IMR-90 (cell line): ENCODE measurements at regions of chr17 and their contacts with region 1.

Region 1: GRCh38 chr17:50200457-50201275 is 765 bp downstream of the COL1A1 start:
- DNase-seq: peak; percentile 82
- ATAC-seq: peak; percentile 24
- H3K4me3 ChIP-seq: peak overlapping the region; percentile 80
- H3K27ac ChIP-seq: peak overlapping the region; percentile 99
- H3K4me1 ChIP-seq: peaks cover 49% of the 10 kb centered on the region
- H3K27me3 ChIP-seq: no peaks in the 10 kb centered on the region
- CTCF ChIP-seq: peak; percentile 67
- POLR2A ChIP-seq: peak; percentile 16
- RAD21 ChIP-seq: peak; percentile 70

Region 2: GRCh38 chr17:50169121-50169764 is 31.4 kb before region 1 on chr17:
- CTCF ChIA-PET with region 1: interaction called, 5 read pairs
- POLR2A ChIA-PET with region 1: interaction called, 4 read pairs
- dilution Hi-C with region 1: no loop called
- in situ Hi-C with region 1: no loop called
- intact Hi-C with region 1: loop called (anchors 1 kb)
- DNase-seq: peak; percentile 74
- ATAC-seq: peak; percentile 66
- H3K4me3 ChIP-seq: no peak overlapping the region
- H3K27ac ChIP-seq: no peak overlapping the region
- H3K4me1 ChIP-seq: peaks cover 8% of the 10 kb centered on the region
- H3K27me3 ChIP-seq: no peaks in the 10 kb centered on the region
- CTCF ChIP-seq: peak; percentile 96
- POLR2A ChIP-seq: peak; percentile 59
- RAD21 ChIP-seq: peak; percentile 92

Region 3: GRCh38 chr17:50184611-50185398 is 15.9 kb before region 1 on chr17:
- CTCF ChIA-PET with region 1: no interaction called
- POLR2A ChIA-PET with region 1: interaction called, 19 read pairs
- dilution Hi-C with region 1: no loop called
- in situ Hi-C with region 1: no loop called
- intact Hi-C with region 1: no loop called
- DNase-seq: peak; percentile 62
- ATAC-seq: no peak
- H3K4me3 ChIP-seq: no peak overlapping the region
- H3K27ac ChIP-seq: peak overlapping the region; percentile 99
- H3K4me1 ChIP-seq: no peaks in the 10 kb centered on the region; the same call in 1 of the 2 replicates
- H3K27me3 ChIP-seq: no peaks in the 10 kb centered on the region
- CTCF ChIP-seq: no peak
- POLR2A ChIP-seq: peak; percentile 11; the same call in 1 of the 2 replicates
- RAD21 ChIP-seq: no peak

Region 4: DNA sequence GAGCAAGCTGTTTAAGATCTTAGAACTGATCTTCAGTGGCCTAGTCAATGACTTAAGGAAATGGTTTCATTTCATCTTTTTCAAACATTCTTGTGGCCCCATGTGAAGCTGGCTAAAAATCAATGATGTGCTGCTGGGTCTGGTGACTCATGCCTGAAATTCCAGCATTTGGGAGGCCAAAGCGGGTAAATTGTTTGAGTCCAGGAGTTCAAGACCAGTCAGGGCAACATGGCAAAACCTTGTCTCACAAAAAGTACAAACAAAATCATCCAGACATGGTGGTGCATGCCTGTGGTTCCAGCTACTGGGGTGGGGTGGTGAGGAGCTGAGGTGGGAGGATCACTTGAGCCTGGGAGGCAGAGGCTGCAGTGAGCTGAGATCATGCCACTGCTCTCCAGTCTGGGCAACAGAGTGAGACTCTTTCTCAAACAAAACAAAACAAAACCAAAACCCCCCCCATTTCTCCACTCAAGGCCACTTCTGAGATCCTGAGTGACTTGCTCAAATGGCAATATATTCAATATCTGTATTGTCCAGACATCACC is 18.2 kb after region 1 on chr17:
- CTCF ChIA-PET with region 1: interaction called, 4 read pairs
- POLR2A ChIA-PET with region 1: interaction called, 37 read pairs
- dilution Hi-C with region 1: no loop called
- in situ Hi-C with region 1: no loop called
- intact Hi-C with region 1: loop called (anchors 1 kb)
- DNase-seq: peak; percentile 96
- ATAC-seq: peak; percentile 61
- H3K4me3 ChIP-seq: no peak overlapping the region
- H3K27ac ChIP-seq: peak overlapping the region; percentile 65
- H3K4me1 ChIP-seq: peaks cover 46% of the 10 kb centered on the region
- H3K27me3 ChIP-seq: no peaks in the 10 kb centered on the region
- CTCF ChIP-seq: no peak
- POLR2A ChIP-seq: peak; percentile 68
- RAD21 ChIP-seq: no peak

Region 5: GRCh38 chr17:50269477-50270434 is 69.1 kb after region 1 on chr17:
- CTCF ChIA-PET with region 1: interaction called, 6 read pairs
- POLR2A ChIA-PET with region 1: interaction called, 149 read pairs
- dilution Hi-C with region 1: no loop called
- in situ Hi-C with region 1: loop called (anchors 5 kb)
- intact Hi-C with region 1: loop called (anchors 1 kb)
- DNase-seq: peak; percentile 83
- ATAC-seq: peak; percentile 62
- H3K4me3 ChIP-seq: peak overlapping the region; percentile 2; the same call in 1 of the 2 replicates
- H3K27ac ChIP-seq: peak overlapping the region; percentile 88
- H3K4me1 ChIP-seq: peaks cover 71% of the 10 kb centered on the region
- H3K27me3 ChIP-seq: no peaks in the 10 kb centered on the region
- CTCF ChIP-seq: peak; percentile 94
- POLR2A ChIP-seq: no peak
- RAD21 ChIP-seq: peak; percentile 94

Region 6: DNA sequence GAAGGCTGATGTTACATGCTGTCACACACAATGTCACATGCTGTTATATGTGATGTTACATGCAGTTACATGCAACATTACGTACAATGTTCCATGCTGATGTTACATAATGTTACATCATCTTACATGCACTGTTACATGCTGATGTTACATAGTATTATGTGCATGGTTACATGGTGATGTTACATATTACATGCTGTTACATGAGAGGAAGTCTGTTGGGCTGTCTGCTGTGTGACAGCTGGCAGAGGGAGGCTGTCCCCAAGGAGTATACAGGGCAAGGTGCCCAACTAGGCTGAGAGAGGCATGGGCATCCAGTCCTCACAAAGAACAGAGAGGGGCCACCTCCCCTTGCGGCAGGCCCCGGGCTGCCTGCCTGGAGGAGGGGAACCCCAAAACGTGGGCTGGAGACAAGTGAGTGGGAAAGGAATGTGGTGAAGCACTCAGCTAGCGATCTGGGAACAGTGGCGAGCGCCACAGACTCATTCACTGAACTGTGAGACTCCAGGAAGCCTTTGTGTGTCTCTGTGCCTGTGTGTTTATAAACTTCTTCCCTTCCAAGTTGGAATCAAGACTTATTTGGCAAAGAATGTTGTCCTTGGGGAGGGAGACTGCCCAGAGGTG is 104.2 kb after region 1 on chr17:
- CTCF ChIA-PET with region 1: no interaction called
- POLR2A ChIA-PET with region 1: interaction called, 14 read pairs
- dilution Hi-C with region 1: no loop called
- in situ Hi-C with region 1: no loop called
- intact Hi-C with region 1: no loop called
- DNase-seq: peak; percentile 79
- ATAC-seq: peak; percentile 85
- H3K4me3 ChIP-seq: no peak overlapping the region
- H3K27ac ChIP-seq: peak overlapping the region; percentile 63
- H3K4me1 ChIP-seq: peaks cover 15% of the 10 kb centered on the region
- H3K27me3 ChIP-seq: no peaks in the 10 kb centered on the region
- CTCF ChIP-seq: no peak
- POLR2A ChIP-seq: no peak
- RAD21 ChIP-seq: no peak